Cardiac septum (tissue), 1 donor: ENCODE measurements at regions of chr14 and their contacts with region 1.

Region 1: DNA sequence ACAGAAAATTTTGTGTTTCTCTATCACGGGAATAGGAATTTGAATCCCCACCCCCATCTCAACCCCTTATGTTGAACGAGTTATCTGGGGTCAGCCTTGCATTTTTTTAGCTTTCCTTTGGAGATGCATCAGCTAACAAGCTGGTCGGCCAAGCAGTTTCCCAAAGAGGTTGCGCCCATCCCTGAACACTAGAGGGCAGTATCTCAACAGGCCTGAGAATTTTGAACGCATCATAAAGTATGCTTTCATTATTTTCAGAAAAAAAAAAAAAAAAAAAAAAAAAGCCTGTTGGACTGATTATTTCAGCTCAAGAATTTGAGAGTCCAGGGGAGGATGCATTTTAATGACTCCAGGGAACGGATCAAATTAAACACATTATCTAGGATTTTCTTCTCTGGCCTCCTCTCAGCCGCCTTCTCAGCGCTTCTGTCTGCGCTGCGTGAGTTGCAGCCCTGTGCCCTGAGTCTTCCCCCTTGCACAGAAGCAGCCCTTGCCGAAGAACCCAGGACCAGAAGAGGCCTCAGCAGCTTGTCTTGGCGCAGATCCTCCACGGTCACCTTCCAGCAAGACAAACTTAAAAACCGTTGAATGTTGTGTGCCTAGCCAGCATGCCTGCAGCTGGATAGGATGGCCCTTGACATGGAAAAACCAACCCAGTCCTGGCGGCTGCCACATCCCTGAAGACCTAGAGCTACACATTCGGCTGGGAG is 76.6 kb upstream of the GZMB start:
- DNase-seq: no peak

Region 2: DNA sequence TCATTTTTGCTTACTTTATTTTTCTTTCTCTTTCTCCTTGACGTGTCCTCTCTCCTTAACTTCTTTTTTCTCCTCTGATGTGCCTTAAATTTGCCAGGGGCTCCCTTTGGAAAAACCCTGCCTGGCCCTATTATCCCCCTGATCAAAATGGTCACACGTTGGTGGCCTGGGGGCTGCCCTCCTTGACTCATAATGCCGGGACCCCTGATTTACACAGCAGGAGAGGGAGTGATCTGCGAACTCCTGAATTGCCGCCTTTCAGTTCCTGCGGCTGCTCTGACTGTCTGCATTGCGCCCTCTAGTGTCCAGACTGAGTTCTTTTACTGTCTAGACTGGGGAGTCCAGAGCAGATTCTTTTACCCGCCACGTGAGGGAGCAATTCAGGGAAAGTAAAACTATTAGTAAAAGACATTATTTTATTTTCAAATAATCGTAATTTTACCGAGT is 31.7 kb before region 1 on chr14:
- intact Hi-C with region 1: no loop called
- DNase-seq: no peak

Region 3: DNA sequence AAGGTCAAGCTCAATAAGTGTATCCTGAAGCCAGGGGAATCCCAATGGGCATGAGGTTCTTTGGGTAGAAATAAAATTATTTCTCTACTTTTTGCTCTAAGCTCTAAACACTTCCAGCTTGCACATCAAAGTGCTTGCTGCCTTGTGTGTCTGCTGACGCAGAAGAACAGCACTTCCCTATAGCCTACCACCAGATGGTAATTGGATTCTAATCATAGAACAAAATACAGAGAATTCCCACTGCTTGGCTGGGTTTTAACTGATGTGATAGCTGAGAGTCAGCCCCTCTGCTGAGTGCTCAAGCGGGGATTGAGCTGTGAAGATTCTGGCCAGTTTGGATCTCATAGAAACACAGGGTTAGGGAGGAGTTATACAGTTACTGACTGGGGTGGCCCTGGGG is 55.9 kb after region 1 on chr14:
- intact Hi-C with region 1: no loop called
- DNase-seq: no peak

Region 4: GRCh38 chr14:24861083-24861630 is 150.6 kb after region 1 on chr14:
- intact Hi-C with region 1: no loop called
- DNase-seq: no peak

Region 5: GRCh38 chr14:25237845-25238244 is 527.3 kb after region 1 on chr14:
- intact Hi-C with region 1: loop called (anchors 10 kb)
- DNase-seq: no peak